ENCODE measurements at regions of chr11 and their contacts with region 1.

Region 1: GRCh38 chr11:133180201-133180600 is 352.1 kb downstream of the OPCML start:
- DNase-seq: no peak
- ATAC-seq: no peak
- H3K4me3 ChIP-seq: no peak overlapping the region
- H3K27ac ChIP-seq: no peak overlapping the region
- H3K4me1 ChIP-seq: no peaks in the 10 kb centered on the region
- H3K27me3 ChIP-seq: peaks cover 2% of the 10 kb centered on the region; the same call in 1 of the 2 replicates
- CTCF ChIP-seq: no peak

Region 2: GRCh38 chr11:132032555-132032954 is 1147.6 kb before region 1 on chr11:
- CTCF ChIA-PET with region 1: no interaction called
- POLR2A ChIA-PET with region 1: no interaction called
- in situ Hi-C with region 1: no loop called
- intact Hi-C with region 1: no loop called
- DNase-seq: no peak
- ATAC-seq: no peak
- H3K4me3 ChIP-seq: no peak overlapping the region
- H3K27ac ChIP-seq: no peak overlapping the region
- H3K4me1 ChIP-seq: no peaks in the 10 kb centered on the region
- H3K27me3 ChIP-seq: no peaks in the 10 kb centered on the region
- CTCF ChIP-seq: no peak

Region 3: GRCh38 chr11:133198438-133198837 is 18.2 kb after region 1 on chr11:
- CTCF ChIA-PET with region 1: no interaction called
- POLR2A ChIA-PET with region 1: interaction called, 12 read pairs
- in situ Hi-C with region 1: no loop called
- intact Hi-C with region 1: no loop called
- DNase-seq: no peak
- ATAC-seq: no peak
- H3K4me3 ChIP-seq: no peak overlapping the region
- H3K27ac ChIP-seq: no peak overlapping the region
- H3K4me1 ChIP-seq: no peaks in the 10 kb centered on the region
- H3K27me3 ChIP-seq: peaks cover 3% of the 10 kb centered on the region
- CTCF ChIP-seq: no peak